ENCODE measurements at regions of chr1 and their contacts with region 1.

Region 1: GRCh38 chr1:226062558-226063223 is at the start of gene H3-3A:
- DNase-seq: peak; percentile 97
- H3K4me3 Mint-ChIP-seq: peak within 1 kb of the TSS; percentile 100
- H3K27ac Mint-ChIP-seq: peak within 1 kb of the TSS; percentile 99
- H3K4me1 Mint-ChIP-seq: peaks cover 35% of the 10 kb centered on the region
- H3K27me3 Mint-ChIP-seq: no peaks in the 10 kb centered on the region
- total RNA-seq, gene H3-3A: 437 and 443 TPM in 2 replicates

Region 2: DNA sequence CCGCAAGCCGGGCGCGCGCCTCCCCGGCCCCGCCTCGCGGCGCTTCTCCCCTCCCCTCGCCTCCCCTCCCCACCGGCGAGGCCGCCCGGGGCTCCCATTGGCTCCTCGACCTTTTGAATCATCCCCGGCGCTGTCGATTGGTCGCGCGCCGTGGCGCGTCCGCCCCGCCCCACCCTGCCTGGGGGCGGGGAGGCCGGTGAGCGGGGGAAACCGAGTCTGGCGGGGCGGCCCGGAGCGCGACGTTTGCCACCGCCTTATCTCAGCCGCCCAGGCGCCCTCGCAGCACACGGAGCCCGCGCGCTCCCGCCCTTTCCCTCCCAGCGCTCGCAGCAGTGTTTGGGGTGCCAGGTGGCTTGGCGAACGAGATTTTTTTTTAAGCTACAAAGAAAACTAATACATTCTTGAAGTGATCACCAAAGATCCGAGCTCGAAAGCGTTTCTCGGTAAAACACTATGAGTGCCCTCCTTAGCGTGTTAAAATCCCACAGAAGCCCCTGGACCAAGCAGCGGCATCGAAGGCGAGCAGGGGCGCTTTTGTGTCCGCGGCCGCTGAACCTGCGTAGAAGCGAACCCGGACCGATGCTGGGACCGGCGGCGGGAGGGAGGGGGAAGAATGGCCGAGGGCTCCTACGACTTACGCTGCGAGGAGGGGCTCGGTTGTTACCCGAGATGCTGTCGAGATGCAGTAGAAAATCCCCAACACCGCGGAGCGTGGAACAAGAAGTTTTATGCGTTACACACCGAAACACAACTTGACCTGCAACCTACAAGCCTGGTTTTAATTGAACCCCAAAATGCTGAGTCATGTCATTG is 634.4 kb before region 1 on chr1:
- intact Hi-C with region 1: loop called (anchors 5 kb)
- DNase-seq: peak; percentile 92
- H3K4me3 Mint-ChIP-seq: peak overlapping the region; percentile 74
- H3K27ac Mint-ChIP-seq: peak overlapping the region; percentile 94
- H3K4me1 Mint-ChIP-seq: peaks cover 40% of the 10 kb centered on the region
- H3K27me3 Mint-ChIP-seq: no peaks in the 10 kb centered on the region

Region 3: GRCh38 chr1:225923692-225924555 is 138.8 kb before region 1 on chr1 and contains the start of gene PYCR2:
- intact Hi-C with region 1: loop called (anchors 5 kb)
- DNase-seq: peak; percentile 94
- H3K4me3 Mint-ChIP-seq: peak within 1 kb of the TSS; percentile 92
- H3K27ac Mint-ChIP-seq: peak within 1 kb of the TSS; percentile 91
- H3K4me1 Mint-ChIP-seq: peaks cover 43% of the 10 kb centered on the region
- H3K27me3 Mint-ChIP-seq: no peaks in the 10 kb centered on the region
- total RNA-seq, gene PYCR2: 117 and 121 TPM in 2 replicates

Region 4: GRCh38 chr1:226083302-226084101 is 20.8 kb after region 1 on chr1:
- intact Hi-C with region 1: loop called (anchors 2 kb)
- DNase-seq: peak; percentile 90
- H3K4me3 Mint-ChIP-seq: peak overlapping the region; percentile 84
- H3K27ac Mint-ChIP-seq: peak overlapping the region; percentile 70
- H3K4me1 Mint-ChIP-seq: peaks cover 6% of the 10 kb centered on the region
- H3K27me3 Mint-ChIP-seq: peaks cover 3% of the 10 kb centered on the region

Region 5: DNA sequence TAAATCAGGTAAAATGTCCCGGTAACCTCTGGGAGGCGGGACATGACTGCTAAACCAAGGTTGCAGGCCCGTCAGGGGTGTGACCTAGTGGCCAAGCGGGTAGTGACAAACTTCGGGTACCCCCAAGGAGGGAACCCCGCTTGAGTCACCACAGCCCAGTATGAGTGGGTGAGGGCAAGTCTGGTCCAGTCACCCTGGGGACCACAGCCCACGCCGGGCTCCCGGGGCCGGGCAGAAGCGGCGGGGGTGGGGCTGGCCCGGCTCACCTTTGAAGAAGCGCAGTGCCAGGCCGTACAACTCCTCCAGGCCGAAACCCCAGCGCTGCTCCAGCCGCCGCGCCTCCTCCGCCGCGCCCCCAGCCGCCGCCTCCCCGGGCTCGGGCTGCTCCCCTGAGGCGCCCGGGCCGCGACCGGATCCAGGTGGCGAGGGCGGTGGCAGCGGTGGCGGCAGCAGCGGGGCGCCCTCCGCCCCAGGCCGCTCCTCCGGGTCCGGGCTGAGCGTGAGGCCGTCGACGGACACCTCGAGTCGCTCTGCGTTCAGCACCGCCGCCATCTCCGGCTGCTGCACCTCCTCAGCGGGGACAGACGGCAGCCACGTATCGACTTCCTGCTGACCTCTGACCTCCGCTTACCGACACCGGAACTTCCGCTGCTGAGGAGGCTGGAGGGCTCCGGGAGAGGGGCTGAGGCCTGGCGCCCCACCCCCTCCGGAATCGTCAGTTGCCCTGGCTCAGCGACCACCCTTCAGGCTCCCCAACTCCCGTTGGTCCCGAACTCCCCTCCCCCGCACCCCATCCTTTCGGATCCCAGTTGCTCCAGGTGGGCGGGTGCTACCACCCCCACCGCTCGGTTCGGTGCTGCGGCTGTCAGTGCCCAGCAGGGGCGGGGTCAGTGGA is 123.7 kb after region 1 on chr1 and contains the start of gene ACBD3:
- intact Hi-C with region 1: loop called (anchors 2 kb)
- DNase-seq: peak; percentile 82
- H3K4me3 Mint-ChIP-seq: peak within 1 kb of the TSS; percentile 96
- H3K27ac Mint-ChIP-seq: peak within 1 kb of the TSS; percentile 92
- H3K4me1 Mint-ChIP-seq: peaks cover 22% of the 10 kb centered on the region
- H3K27me3 Mint-ChIP-seq: no peaks in the 10 kb centered on the region
- total RNA-seq, gene ACBD3: 24.3 and 25.4 TPM in 2 replicates

Region 6: DNA sequence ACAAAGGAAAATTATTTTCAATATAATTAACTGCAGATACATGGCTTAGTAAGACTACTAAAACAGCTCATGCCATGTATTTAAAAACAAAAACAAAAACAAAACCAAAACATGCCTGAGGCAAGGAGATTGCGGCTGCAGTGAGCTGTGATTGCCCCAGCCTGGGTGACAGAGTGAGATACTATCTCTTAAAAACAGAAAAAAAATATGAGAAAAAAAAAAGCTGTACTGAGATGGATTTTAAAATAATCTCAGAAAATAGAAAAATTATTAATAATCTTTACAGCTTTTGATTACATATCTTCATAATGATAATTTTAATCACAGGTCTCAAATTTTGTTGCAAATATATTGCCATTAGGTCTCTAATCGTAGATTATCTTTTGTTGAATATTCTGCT is 270.3 kb after region 1 on chr1:
- intact Hi-C with region 1: loop called (anchors 10 kb)
- DNase-seq: no peak
- H3K4me3 Mint-ChIP-seq: peak overlapping the region; percentile 11
- H3K27ac Mint-ChIP-seq: no peak overlapping the region
- H3K4me1 Mint-ChIP-seq: peaks cover 7% of the 10 kb centered on the region
- H3K27me3 Mint-ChIP-seq: no peaks in the 10 kb centered on the region